Naive thymus-derived CD4-positive, alpha-beta T cell (primary cell): ENCODE measurements at regions of chr11 and their contacts with region 1.

Region 1: DNA sequence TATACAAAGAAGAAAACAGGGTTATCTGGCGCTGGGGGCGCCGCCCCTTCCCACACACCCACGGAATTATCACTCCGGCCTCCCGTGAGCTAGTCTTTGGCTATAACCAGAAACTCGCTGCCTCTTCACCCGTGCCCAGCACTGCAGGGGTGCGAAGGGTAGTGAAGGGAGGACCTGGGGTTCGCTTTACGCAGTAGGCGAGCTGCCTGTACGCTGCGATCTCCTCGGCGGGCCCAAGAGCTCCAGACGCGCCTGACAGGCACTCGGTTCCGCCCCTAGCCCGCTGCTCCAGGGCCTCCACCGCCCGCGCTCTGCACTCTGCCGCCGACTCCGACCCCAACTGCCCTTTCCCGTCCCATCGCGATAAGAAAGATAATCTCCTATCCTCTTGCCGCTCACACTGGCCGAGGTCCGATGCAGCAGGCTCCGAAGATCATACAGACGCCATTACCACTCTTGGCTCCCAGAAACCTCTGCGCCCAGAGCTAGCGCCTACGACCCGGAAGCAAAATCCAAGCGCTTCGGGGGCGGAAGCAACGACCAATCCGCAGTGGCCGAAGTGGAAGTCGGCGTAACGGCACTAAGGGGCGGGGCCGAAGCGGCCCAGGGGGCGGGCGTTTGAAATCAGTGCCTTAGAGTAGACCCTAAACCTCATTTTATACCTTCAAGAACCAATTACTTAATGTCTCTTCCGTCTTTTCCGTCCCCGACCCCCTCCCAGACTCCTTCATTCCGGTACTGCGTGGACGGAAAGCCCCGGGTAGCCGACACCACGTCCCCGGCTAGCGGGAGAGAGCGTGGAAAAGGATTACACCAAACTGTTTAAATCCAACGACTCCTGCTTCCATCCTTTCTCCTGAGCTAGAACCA is at the starts of genes CWC15 and KDM4D:
- DNase-seq: peak; percentile 84 to 94 (median 92)
- ATAC-seq: peak; percentile 100
- H3K4me3 ChIP-seq: peak within 1 kb of the TSS; percentile 81
- H3K4me3 Mint-ChIP-seq: peak within 1 kb of the TSS; percentile 88 to 100 (median 96)
- H3K27ac ChIP-seq: peak within 1 kb of the TSS; percentile 91
- H3K27ac Mint-ChIP-seq: peak within 1 kb of the TSS; percentile 92 to 100 (median 96)
- H3K4me1 ChIP-seq: peaks cover 9 to 13% of the 10 kb centered on the region in 2 donors
- H3K4me1 Mint-ChIP-seq: peaks cover 17 to 63% (median 39%) of the 10 kb centered on the region in 7 donors
- H3K27me3 ChIP-seq: no peaks in the 10 kb centered on the region
- H3K27me3 Mint-ChIP-seq: no peaks in the 10 kb centered on the region
- total RNA-seq, gene CWC15: 64.1 to 94.7 (median 66.8) TPM
- total RNA-seq, gene KDM4D: 0.32 to 0.70 (median 0.68) TPM

Region 2: GRCh38 chr11:93741094-93741881 is 1232.0 kb before region 1 on chr11 and contains the starts of genes C11orf54 and TAF1D:
- CTCF ChIA-PET with region 1: no interaction called
- POLR2A ChIA-PET with region 1: interaction called, 3 read pairs
- intact Hi-C with region 1: loop called (anchors 1 to 2 kb)
- DNase-seq: peak; percentile 85 to 98 (median 96)
- ATAC-seq: peak; percentile 96
- H3K4me3 ChIP-seq: peak within 1 kb of the TSS; percentile 88
- H3K4me3 Mint-ChIP-seq: peak within 1 kb of the TSS; percentile 95 to 100 (median 100)
- H3K27ac ChIP-seq: peak within 1 kb of the TSS; percentile 84
- H3K27ac Mint-ChIP-seq: peak within 1 kb of the TSS; percentile 98 to 100 (median 100)
- H3K4me1 ChIP-seq: peaks cover 28 to 31% of the 10 kb centered on the region in 2 donors
- H3K4me1 Mint-ChIP-seq: peaks cover 37 to 92% (median 71%) of the 10 kb centered on the region in 7 donors
- H3K27me3 ChIP-seq: no peaks in the 10 kb centered on the region
- H3K27me3 Mint-ChIP-seq: peaks cover 0 to 3% (median 0%) of the 10 kb centered on the region in 5 donors
- total RNA-seq, gene C11orf54: 16.4 to 42.5 (median 27.2) TPM
- total RNA-seq, gene TAF1D: 116 to 197 (median 183) TPM

Region 3: GRCh38 chr11:94417386-94417987 is 555.8 kb before region 1 on chr11:
- CTCF ChIA-PET with region 1: no interaction called
- POLR2A ChIA-PET with region 1: no interaction called
- intact Hi-C with region 1: no loop called
- DNase-seq: no peak
- ATAC-seq: no peak
- H3K4me3 ChIP-seq: no peak overlapping the region
- H3K4me3 Mint-ChIP-seq: no peak overlapping the region
- H3K27ac ChIP-seq: no peak overlapping the region
- H3K27ac Mint-ChIP-seq: no peak overlapping the region
- H3K4me1 ChIP-seq: no peaks in the 10 kb centered on the region
- H3K4me1 Mint-ChIP-seq: no peaks in the 10 kb centered on the region
- H3K27me3 ChIP-seq: no peaks in the 10 kb centered on the region
- H3K27me3 Mint-ChIP-seq: no peaks in the 10 kb centered on the region

Region 4: GRCh38 chr11:94543695-94544645 is 429.4 kb before region 1 on chr11 and contains the start of gene FUT4:
- CTCF ChIA-PET with region 1: no interaction called
- POLR2A ChIA-PET with region 1: no interaction called
- intact Hi-C with region 1: loop called (anchors 1 kb)
- DNase-seq: peak; percentile 51 to 83 (median 70)
- ATAC-seq: peak; percentile 84
- H3K4me3 ChIP-seq: peak within 1 kb of the TSS; percentile 85
- H3K4me3 Mint-ChIP-seq: peak within 1 kb of the TSS; percentile 93 to 100 (median 98)
- H3K27ac ChIP-seq: peak within 1 kb of the TSS; percentile 88
- H3K27ac Mint-ChIP-seq: peak within 1 kb of the TSS; percentile 96 to 100 (median 99)
- H3K4me1 ChIP-seq: peaks cover 22 to 29% of the 10 kb centered on the region in 2 donors
- H3K4me1 Mint-ChIP-seq: peaks cover 24 to 49% (median 41%) of the 10 kb centered on the region in 7 donors
- H3K27me3 ChIP-seq: no peaks in the 10 kb centered on the region
- H3K27me3 Mint-ChIP-seq: no peaks in the 10 kb centered on the region
- total RNA-seq, gene FUT4: 5.6 to 10.2 (median 6.9) TPM

Region 5: GRCh38 chr11:94933223-94934130 is 39.9 kb before region 1 on chr11:
- CTCF ChIA-PET with region 1: no interaction called
- POLR2A ChIA-PET with region 1: interaction called, 4 read pairs
- intact Hi-C with region 1: loop called in 1 of 2 experiments (anchors 2 kb)
- DNase-seq: no peak
- ATAC-seq: no peak
- H3K4me3 ChIP-seq: no peak overlapping the region
- H3K4me3 Mint-ChIP-seq: peak overlapping the region in 9 of 10 donors; percentile 10 to 90 (median 76)
- H3K27ac ChIP-seq: no peak overlapping the region
- H3K27ac Mint-ChIP-seq: peak overlapping the region in 4 of 9 donors; percentile 52 to 89 (median 68)
- H3K4me1 ChIP-seq: peaks cover 0 to 33% of the 10 kb centered on the region in 2 donors
- H3K4me1 Mint-ChIP-seq: peaks cover 26 to 75% (median 66%) of the 10 kb centered on the region in 7 donors
- H3K27me3 ChIP-seq: no peaks in the 10 kb centered on the region
- H3K27me3 Mint-ChIP-seq: peaks cover 0 to 2% (median 0%) of the 10 kb centered on the region in 5 donors

Region 6: DNA sequence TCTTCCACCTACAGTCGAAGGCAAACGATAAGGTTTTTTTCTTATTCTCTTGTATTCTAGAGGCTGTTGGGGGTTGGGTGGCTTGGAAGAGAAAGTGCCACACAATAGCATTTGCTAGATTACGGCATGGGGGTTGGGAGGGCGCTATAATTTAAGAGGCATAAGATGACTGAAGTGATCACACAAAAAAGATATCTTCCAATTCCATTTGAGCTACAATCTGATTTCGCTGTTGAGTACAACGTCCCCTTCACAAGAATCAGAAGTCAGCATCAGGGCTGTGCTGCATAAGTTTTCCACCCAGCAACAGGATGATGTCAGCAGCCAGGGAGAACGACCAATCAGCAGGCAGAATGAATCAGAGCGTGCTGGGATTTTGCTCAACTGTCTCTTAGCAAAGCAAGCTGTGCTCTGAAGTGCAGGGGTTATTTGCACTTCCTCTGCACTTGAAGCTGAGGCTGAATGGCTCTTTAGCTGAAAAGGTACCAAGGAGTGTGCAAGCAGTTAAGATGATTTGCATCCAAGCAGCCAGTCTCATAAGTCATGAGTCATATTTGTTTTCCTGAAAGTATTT is 280.9 kb after region 1 on chr11:
- CTCF ChIA-PET with region 1: no interaction called
- POLR2A ChIA-PET with region 1: no interaction called
- intact Hi-C with region 1: loop called in 1 of 2 experiments (anchors 1 kb)
- DNase-seq: peak; percentile 45 to 91 (median 84)
- ATAC-seq: peak; percentile 98
- H3K4me3 ChIP-seq: peak overlapping the region; percentile 52
- H3K4me3 Mint-ChIP-seq: peak overlapping the region; percentile 74 to 98 (median 89)
- H3K27ac ChIP-seq: peak overlapping the region; percentile 71
- H3K27ac Mint-ChIP-seq: peak overlapping the region; percentile 81 to 98 (median 90)
- H3K4me1 ChIP-seq: peaks cover 13 to 31% of the 10 kb centered on the region in 2 donors
- H3K4me1 Mint-ChIP-seq: peaks cover 20 to 59% (median 53%) of the 10 kb centered on the region in 7 donors
- H3K27me3 ChIP-seq: no peaks in the 10 kb centered on the region
- H3K27me3 Mint-ChIP-seq: no peaks in the 10 kb centered on the region

Region 7: GRCh38 chr11:96389720-96390487 is 1416.6 kb after region 1 on chr11 and contains the starts of genes CCDC82 and JRKL:
- CTCF ChIA-PET with region 1: no interaction called
- POLR2A ChIA-PET with region 1: interaction called, 7 read pairs
- intact Hi-C with region 1: loop called (anchors 1 kb)
- DNase-seq: peak; percentile 96 to 99 (median 98)
- ATAC-seq: peak; percentile 99
- H3K4me3 ChIP-seq: peak within 1 kb of the TSS; percentile 66
- H3K4me3 Mint-ChIP-seq: peak within 1 kb of the TSS; percentile 84 to 99 (median 94)
- H3K27ac ChIP-seq: peak within 1 kb of the TSS; percentile 86
- H3K27ac Mint-ChIP-seq: peak within 1 kb of the TSS; percentile 71 to 97 (median 91)
- H3K4me1 ChIP-seq: peaks cover 17 to 18% of the 10 kb centered on the region in 2 donors
- H3K4me1 Mint-ChIP-seq: peaks cover 32 to 66% (median 60%) of the 10 kb centered on the region in 7 donors
- H3K27me3 ChIP-seq: no peaks in the 10 kb centered on the region
- H3K27me3 Mint-ChIP-seq: no peaks in the 10 kb centered on the region
- total RNA-seq, gene CCDC82: 21.9 to 46.2 (median 32.0) TPM
- total RNA-seq, gene JRKL: 5.4 to 17.3 (median 10.1) TPM